ENCODE measurements at regions of chr2 and their contacts with region 1.

Region 1: GRCh38 chr2:169925968-169926367 is 98.7 kb downstream of the UBR3 start:
- DNase-seq: peak in 3 of 4 experiments; percentile 22 to 88 (median 73)
- ATAC-seq: peak; percentile 92
- H3K4me3 ChIP-seq: no peak overlapping the region
- H3K27ac ChIP-seq: peak overlapping the region; percentile 61
- H3K4me1 ChIP-seq: peaks cover 3 to 16% of the 10 kb centered on the region in 2 experiments; a peak in 3 of 5 replicates
- H3K27me3 ChIP-seq: no peaks in the 10 kb centered on the region
- CTCF ChIP-seq: no peak
- EP300 ChIP-seq: peak; percentile 84
- POLR2A ChIP-seq: no peak
- RAD21 ChIP-seq: peak in 1 of 2 experiments; percentile 16; a peak in 1 of 4 replicates

Region 2: DNA sequence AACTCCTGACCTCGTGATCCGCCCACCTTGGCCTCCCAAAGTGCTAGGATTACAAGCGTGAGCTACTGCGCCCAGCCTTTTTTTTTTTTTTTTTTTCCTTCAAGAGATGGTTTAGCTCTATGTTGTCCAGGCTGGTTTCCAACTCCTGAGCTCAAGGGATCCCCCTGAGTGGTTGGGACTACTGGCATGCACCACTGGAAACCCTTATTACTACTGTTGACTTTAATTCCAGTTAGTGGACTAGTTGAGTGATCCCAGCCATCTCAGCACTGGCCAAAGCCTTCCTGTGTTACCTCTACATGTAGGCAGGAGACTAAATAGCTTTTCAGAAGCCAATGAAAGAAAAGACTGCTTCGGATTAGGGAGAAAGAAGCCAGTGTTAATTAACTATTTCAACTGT is 135.4 kb before region 1 on chr2:
- CTCF ChIA-PET with region 1: no interaction called
- POLR2A ChIA-PET with region 1: no interaction called
- in situ Hi-C with region 1: no loop called
- intact Hi-C with region 1: no loop called
- DNase-seq: no peak
- ATAC-seq: no peak
- H3K4me3 ChIP-seq: no peak overlapping the region
- H3K27ac ChIP-seq: no peak overlapping the region
- H3K4me1 ChIP-seq: peaks cover 0 to 6% of the 10 kb centered on the region in 2 experiments; a peak in 2 of 5 replicates
- H3K27me3 ChIP-seq: no peaks in the 10 kb centered on the region
- CTCF ChIP-seq: no peak
- EP300 ChIP-seq: no peak
- POLR2A ChIP-seq: no peak
- RAD21 ChIP-seq: no peak

Region 3: GRCh38 chr2:169877398-169877797 is 48.6 kb before region 1 on chr2:
- CTCF ChIA-PET with region 1: interaction called, 3 read pairs
- POLR2A ChIA-PET with region 1: no interaction called
- in situ Hi-C with region 1: no loop called
- intact Hi-C with region 1: loop called (anchors 2 kb)
- DNase-seq: peak in 1 of 4 experiments; percentile 59
- ATAC-seq: peak; percentile 86
- H3K4me3 ChIP-seq: no peak overlapping the region
- H3K27ac ChIP-seq: no peak overlapping the region
- H3K4me1 ChIP-seq: no peaks in the 10 kb centered on the region
- H3K27me3 ChIP-seq: no peaks in the 10 kb centered on the region
- CTCF ChIP-seq: peak; percentile 53 to 79 (median 68); a peak in 5 of 6 replicates
- EP300 ChIP-seq: no peak
- POLR2A ChIP-seq: no peak
- RAD21 ChIP-seq: peak; percentile 71 to 91

Region 4: GRCh38 chr2:169910109-169910799 is 15.7 kb before region 1 on chr2:
- CTCF ChIA-PET with region 1: no interaction called
- POLR2A ChIA-PET with region 1: interaction called, 4 read pairs
- in situ Hi-C with region 1: no loop called
- intact Hi-C with region 1: loop called (anchors 1 kb)
- DNase-seq: peak; percentile 48 to 81 (median 67)
- ATAC-seq: peak; percentile 97
- H3K4me3 ChIP-seq: no peak overlapping the region
- H3K27ac ChIP-seq: peak overlapping the region; percentile 45; the same call in 2 of the 3 replicates
- H3K4me1 ChIP-seq: peaks cover 0 to 18% of the 10 kb centered on the region in 2 experiments; a peak in 4 of 5 replicates
- H3K27me3 ChIP-seq: no peaks in the 10 kb centered on the region
- CTCF ChIP-seq: peak in 1 of 3 experiments; percentile 6; a peak in 1 of 6 replicates
- EP300 ChIP-seq: peak; percentile 86
- POLR2A ChIP-seq: no peak
- RAD21 ChIP-seq: no peak

Measured in K562 (cell line).